PC-9 (cell line): ENCODE measurements at regions of chr13 and their contacts with region 1.

Region 1: DNA sequence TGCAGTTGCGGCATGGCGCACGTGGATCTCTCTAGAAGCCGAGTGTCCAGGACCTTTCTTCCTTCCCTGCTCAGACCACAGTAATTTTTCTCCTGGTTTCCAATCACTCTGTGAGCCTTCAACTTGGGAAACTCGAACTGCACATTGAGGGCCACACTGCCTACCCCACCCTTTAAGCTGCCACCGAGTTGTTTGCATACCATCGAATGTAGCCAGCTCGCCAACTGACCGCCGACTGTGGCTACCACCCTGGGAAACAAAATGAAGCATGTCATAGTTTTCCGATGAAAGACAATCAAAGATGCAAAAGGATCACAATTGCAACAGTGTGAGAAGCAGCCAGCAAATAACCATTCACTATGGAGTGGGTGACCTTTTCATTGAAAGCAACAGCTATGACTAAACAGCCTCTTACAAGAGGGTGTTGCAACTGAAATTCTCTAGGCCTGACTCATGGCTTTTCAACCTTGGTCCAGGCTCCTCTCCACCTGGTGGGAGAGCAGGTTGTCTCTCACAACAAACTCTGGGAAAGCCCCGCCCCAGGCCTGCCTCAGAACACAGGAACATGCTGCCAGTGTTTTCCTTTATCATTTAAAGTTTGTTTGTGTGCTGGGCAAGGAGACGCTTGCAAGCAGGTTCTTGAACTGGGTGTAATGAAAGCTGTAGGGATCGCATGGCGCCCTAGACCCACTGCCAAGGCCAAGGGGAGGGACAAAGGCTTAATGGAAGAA is 141.7 kb upstream of the SERP2 start:
- DNase-seq: peak; percentile 89 to 98
- H3K4me3 ChIP-seq: no peak overlapping the region; the same call in 1 of the 2 replicates
- H3K27ac ChIP-seq: peak overlapping the region; percentile 99
- H3K4me1 ChIP-seq: peaks cover 40% of the 10 kb centered on the region
- H3K27me3 ChIP-seq: no peaks in the 10 kb centered on the region
- CTCF ChIP-seq: no peak

Region 2: GRCh38 chr13:44068737-44069136 is 163.2 kb before region 1 on chr13:
- CTCF ChIA-PET with region 1: no interaction called
- POLR2A ChIA-PET with region 1: no interaction called
- intact Hi-C with region 1: loop called (anchors 2 kb)
- DNase-seq: peak in 1 of 2 experiments; percentile 79
- H3K4me3 ChIP-seq: no peak overlapping the region
- H3K27ac ChIP-seq: peak overlapping the region; percentile 31
- H3K4me1 ChIP-seq: peaks cover 8% of the 10 kb centered on the region; the same call in 1 of the 2 replicates
- H3K27me3 ChIP-seq: no peaks in the 10 kb centered on the region
- CTCF ChIP-seq: no peak

Region 3: GRCh38 chr13:44108331-44108858 is 123.6 kb before region 1 on chr13:
- CTCF ChIA-PET with region 1: no interaction called
- POLR2A ChIA-PET with region 1: no interaction called
- intact Hi-C with region 1: loop called (anchors 1 kb)
- DNase-seq: peak; percentile 62 to 93
- H3K4me3 ChIP-seq: 0 out of 2 replicates have a peak overlapping the region, but pooled peaks have one; percentile 6
- H3K27ac ChIP-seq: peak overlapping the region; percentile 76
- H3K4me1 ChIP-seq: peaks cover 50% of the 10 kb centered on the region
- H3K27me3 ChIP-seq: no peaks in the 10 kb centered on the region
- CTCF ChIP-seq: no peak

Region 4: GRCh38 chr13:44155422-44156293 is 76.3 kb before region 1 on chr13:
- CTCF ChIA-PET with region 1: no interaction called
- POLR2A ChIA-PET with region 1: no interaction called
- intact Hi-C with region 1: loop called (anchors 5 kb)
- DNase-seq: no peak
- H3K4me3 ChIP-seq: no peak overlapping the region
- H3K27ac ChIP-seq: no peak overlapping the region
- H3K4me1 ChIP-seq: peaks cover 29% of the 10 kb centered on the region
- H3K27me3 ChIP-seq: no peaks in the 10 kb centered on the region
- CTCF ChIP-seq: no peak

Region 5: GRCh38 chr13:44188257-44188656 is 43.7 kb before region 1 on chr13:
- CTCF ChIA-PET with region 1: no interaction called
- POLR2A ChIA-PET with region 1: interaction called, 3 read pairs
- intact Hi-C with region 1: loop called (anchors 1 kb)
- DNase-seq: peak; percentile 46 to 80
- H3K4me3 ChIP-seq: no peak overlapping the region
- H3K27ac ChIP-seq: peak overlapping the region; percentile 88
- H3K4me1 ChIP-seq: peaks cover 17% of the 10 kb centered on the region
- H3K27me3 ChIP-seq: no peaks in the 10 kb centered on the region
- CTCF ChIP-seq: no peak

Region 6: GRCh38 chr13:44267966-44268365 is 36.0 kb after region 1 on chr13:
- CTCF ChIA-PET with region 1: no interaction called
- POLR2A ChIA-PET with region 1: interaction called, 13 read pairs
- intact Hi-C with region 1: no loop called
- DNase-seq: peak; percentile 25 to 73
- H3K4me3 ChIP-seq: no peak overlapping the region
- H3K27ac ChIP-seq: peak overlapping the region; percentile 56
- H3K4me1 ChIP-seq: peaks cover 26% of the 10 kb centered on the region
- H3K27me3 ChIP-seq: no peaks in the 10 kb centered on the region
- CTCF ChIP-seq: no peak